ENCODE measurements at regions of chr20 and their contacts with region 1.

Region 1: DNA sequence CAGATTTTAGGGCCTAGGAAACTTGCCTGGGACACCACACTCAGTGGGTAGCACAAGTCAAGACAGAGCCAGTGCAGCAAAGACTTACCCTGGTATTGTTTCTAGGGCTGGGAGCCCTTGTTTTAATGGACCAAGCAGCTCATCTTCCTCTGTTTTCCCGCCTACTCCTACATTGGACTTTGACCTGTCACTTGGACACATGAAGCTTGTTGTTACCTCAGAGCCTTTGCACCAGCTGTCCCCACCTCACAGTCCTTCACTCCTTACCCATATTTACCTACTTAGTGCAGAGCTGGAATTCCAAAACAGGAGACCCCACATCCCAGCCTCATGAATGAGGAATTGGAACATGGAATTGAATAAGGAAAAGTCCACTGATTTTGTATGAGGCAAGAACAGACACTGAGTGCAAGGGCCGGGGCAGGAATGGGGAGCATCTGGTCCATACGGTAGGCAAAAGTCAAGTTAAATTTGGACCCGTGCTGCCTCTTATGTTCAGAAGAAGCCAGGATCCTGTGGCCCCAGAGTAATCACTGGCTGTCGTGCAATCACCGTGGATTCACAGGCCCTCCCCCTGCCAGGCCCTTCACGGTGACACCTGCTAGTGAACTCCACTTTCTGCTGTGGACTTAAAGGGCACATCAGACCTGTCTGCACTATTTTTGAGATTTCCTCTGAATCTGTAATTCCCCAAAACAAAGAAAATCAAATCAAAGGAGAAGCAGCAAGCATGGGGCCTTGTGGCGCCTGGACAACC is 236.9 kb upstream of the PMEPA1 start:
- DNase-seq: peak; percentile 56

Region 2: DNA sequence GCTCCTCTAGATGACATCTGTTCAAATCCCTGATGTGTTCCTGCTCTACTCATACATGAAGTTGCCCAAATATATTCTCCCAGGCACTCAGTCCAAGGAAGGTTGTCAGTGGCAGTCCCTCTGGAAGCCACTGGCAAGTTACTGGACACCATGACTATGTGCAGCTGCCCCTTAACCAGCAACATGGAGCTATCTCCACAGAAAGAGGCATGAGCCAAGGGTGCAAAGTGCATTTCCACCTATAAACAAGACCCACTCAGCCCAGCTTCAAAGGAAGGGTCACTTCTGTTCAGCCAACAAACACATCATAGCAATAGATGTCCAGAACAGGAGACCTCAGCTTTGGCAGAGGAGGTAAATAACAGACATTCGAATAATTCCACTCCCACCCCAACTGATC is 19.4 kb before region 1 on chr20:
- intact Hi-C with region 1: loop called in 1 of 2 experiments (anchors 1 kb)
- DNase-seq: no peak